ENCODE measurements at regions of chr19 and their contacts with region 1.

Region 1: GRCh38 chr19:45584332-45585157 is at the start of gene OPA3:
- DNase-seq: peak; percentile 97 to 99
- H3K4me3 ChIP-seq: peak within 1 kb of the TSS; percentile 87
- H3K27ac ChIP-seq: peak within 1 kb of the TSS; percentile 80
- H3K4me1 ChIP-seq: peaks cover 16% of the 10 kb centered on the region
- H3K27me3 ChIP-seq: no peaks in the 10 kb centered on the region
- CTCF ChIP-seq: peak; percentile 41; the same call in 1 of the 2 replicates
- total RNA-seq, gene OPA3: 10.8 and 15.2 TPM in 2 replicates

Region 2: GRCh38 chr19:45385392-45386221 is 198.9 kb before region 1 on chr19:
- CTCF ChIA-PET with region 1: no interaction called
- POLR2A ChIA-PET with region 1: interaction called, 11 read pairs
- intact Hi-C with region 1: no loop called
- DNase-seq: no peak
- H3K4me3 ChIP-seq: no peak overlapping the region
- H3K27ac ChIP-seq: no peak overlapping the region
- H3K4me1 ChIP-seq: no peaks in the 10 kb centered on the region
- H3K27me3 ChIP-seq: no peaks in the 10 kb centered on the region
- CTCF ChIP-seq: no peak

Region 3: GRCh38 chr19:45506246-45506990 is 78.1 kb before region 1 on chr19:
- CTCF ChIA-PET with region 1: no interaction called
- POLR2A ChIA-PET with region 1: no interaction called
- intact Hi-C with region 1: loop called (anchors 1 kb)
- DNase-seq: peak; percentile 85 to 96
- H3K4me3 ChIP-seq: peak overlapping the region; percentile 97
- H3K27ac ChIP-seq: peak overlapping the region; percentile 95
- H3K4me1 ChIP-seq: peaks cover 21% of the 10 kb centered on the region
- H3K27me3 ChIP-seq: no peaks in the 10 kb centered on the region
- CTCF ChIP-seq: peak; percentile 74

Region 4: GRCh38 chr19:45523642-45524256 is 60.8 kb before region 1 on chr19:
- CTCF ChIA-PET with region 1: no interaction called
- POLR2A ChIA-PET with region 1: interaction called, 3 read pairs
- intact Hi-C with region 1: loop called (anchors 5 kb)
- DNase-seq: peak; percentile 75 to 81
- H3K4me3 ChIP-seq: no peak overlapping the region
- H3K27ac ChIP-seq: peak overlapping the region; percentile 17; the same call in 1 of the 2 replicates
- H3K4me1 ChIP-seq: peaks cover 36% of the 10 kb centered on the region
- H3K27me3 ChIP-seq: no peaks in the 10 kb centered on the region
- CTCF ChIP-seq: peak; percentile 98

Region 5: GRCh38 chr19:45547976-45548609 is 36.5 kb before region 1 on chr19:
- CTCF ChIA-PET with region 1: no interaction called
- POLR2A ChIA-PET with region 1: no interaction called
- intact Hi-C with region 1: loop called (anchors 1 kb)
- DNase-seq: peak; percentile 90 to 95
- H3K4me3 ChIP-seq: no peak overlapping the region
- H3K27ac ChIP-seq: peak overlapping the region; percentile 74
- H3K4me1 ChIP-seq: peaks cover 17% of the 10 kb centered on the region
- H3K27me3 ChIP-seq: no peaks in the 10 kb centered on the region
- CTCF ChIP-seq: no peak

Region 6: DNA sequence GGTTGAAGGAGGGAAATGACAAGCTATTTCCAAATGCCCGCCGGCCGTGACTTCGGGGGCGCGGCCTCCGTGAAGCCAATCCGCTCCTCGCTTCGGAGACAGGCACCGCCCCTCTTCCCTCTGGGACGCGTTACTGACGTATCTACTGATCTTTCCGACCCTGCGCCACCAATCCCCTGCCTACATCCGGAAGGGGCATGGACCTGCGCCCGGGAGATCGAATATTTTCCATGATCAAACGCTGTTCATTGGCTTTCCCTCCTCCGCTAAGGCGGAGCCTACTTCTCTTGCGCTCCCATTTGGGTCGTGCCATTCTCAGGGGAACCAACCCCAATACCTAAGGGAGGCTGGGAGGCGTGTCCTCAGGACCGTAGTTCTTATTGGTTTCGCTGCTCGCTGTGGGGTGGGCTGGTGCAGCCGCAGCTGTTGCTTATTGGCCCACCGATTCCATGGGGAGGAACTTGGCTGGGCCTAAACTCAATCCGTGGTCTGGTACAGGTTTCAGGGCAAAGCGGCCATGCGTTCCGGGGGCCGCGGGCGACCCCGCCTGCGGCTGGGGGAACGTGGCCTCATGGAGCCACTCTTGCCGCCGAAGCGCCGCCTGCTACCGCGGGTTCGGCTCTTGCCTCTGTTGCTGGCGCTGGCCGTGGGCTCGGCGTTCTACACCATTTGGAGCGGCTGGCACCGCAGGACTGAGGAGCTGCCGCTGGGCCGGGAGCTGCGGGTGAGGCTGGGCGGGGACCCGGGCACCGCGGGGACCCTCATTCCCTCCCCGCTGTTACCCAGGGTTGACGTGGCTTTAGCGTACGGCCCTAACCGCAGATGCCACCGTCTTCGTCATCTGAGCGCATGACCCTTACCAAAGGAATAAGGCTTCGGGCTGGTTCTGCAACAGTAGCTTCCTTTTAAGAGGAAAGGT is 107.9 kb after region 1 on chr19 and contains the start of gene QPCTL:
- CTCF ChIA-PET with region 1: no interaction called
- POLR2A ChIA-PET with region 1: no interaction called
- intact Hi-C with region 1: loop called (anchors 2 kb)
- DNase-seq: peak; percentile 97 to 100
- H3K4me3 ChIP-seq: peak within 1 kb of the TSS; percentile 80
- H3K27ac ChIP-seq: peak within 1 kb of the TSS; percentile 72
- H3K4me1 ChIP-seq: peaks cover 11% of the 10 kb centered on the region
- H3K27me3 ChIP-seq: no peaks in the 10 kb centered on the region
- CTCF ChIP-seq: no peak
- total RNA-seq, gene QPCTL: 27.6 and 42.8 TPM in 2 replicates

Region 7: DNA sequence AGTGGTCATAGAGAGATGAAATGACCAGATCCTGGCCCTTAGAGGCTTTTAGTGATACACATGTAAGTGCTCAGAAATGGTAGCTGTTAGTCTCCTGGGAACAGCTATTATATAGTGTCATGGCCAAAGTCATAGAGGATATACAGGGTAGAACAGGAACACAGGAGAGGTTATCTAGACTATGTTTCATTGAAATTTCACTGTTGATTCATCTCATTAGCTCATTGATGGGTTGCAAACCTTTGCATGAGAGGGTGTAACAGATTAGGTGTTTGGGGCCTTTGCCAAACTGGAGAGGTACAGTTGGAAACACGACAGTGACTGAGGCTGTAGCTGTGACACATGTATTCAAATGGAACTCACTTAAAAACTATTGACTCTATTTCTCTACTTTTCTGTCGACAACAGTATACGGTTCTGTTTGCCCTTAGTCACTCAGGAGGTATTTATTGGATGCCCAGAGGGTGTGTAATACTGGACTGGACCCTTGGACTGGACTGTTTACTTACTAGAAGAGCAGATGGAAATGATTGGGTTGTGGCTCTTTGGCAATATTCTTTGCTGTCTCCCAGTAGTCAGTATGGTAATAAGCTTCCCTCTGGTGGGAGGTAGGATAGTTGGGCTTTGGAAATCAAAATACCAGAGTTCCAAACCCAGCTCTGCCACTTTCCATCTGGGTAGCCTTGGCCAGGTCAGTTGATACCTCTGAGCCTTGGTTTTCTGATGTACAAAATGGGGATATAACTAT is 1306.1 kb after region 1 on chr19:
- CTCF ChIA-PET with region 1: no interaction called
- POLR2A ChIA-PET with region 1: interaction called, 12 read pairs
- intact Hi-C with region 1: no loop called
- DNase-seq: peak in 1 of 2 experiments; percentile 97
- H3K4me3 ChIP-seq: 0 out of 2 replicates have a peak overlapping the region, but pooled peaks have one; percentile 4
- H3K27ac ChIP-seq: peak overlapping the region; percentile 80
- H3K4me1 ChIP-seq: peaks cover 71% of the 10 kb centered on the region
- H3K27me3 ChIP-seq: no peaks in the 10 kb centered on the region
- CTCF ChIP-seq: no peak